Caco-2 (cell line): ENCODE measurements at regions of chr18 and their contacts with region 1.

Region 1: DNA sequence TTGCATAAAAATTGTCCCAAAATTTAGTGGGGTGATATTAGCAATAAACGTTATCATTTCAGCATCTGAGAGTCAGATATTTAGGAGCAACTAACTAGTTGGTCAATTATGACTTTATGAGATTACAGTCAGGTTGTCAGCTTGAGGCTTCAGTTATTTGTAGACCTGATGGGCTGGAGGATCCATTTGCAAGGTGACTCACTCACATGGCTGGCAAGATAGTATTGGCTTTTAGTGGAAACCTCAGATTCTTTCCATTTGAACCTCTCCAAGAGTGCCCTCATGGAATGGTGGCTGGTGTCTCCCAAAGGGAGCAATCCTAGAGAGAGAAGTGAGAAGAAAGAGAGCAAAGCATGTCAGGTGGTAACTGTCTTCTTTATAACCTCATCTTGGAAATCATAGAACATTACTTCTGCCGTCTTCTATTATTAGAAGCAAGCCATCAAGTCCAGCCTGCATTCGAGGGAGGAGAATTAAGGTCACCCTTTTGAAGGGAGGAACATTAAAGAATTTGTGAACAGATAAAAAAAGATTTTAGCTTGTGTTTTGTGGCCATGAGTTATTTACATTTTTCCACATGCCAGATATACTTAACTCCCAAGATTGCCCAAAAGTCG is 92.5 kb downstream of the HAUS1 start:
- DNase-seq: no peak
- H3K4me3 ChIP-seq: no peak overlapping the region
- H3K4me3 Mint-ChIP-seq: no peak overlapping the region
- H3K27ac Mint-ChIP-seq: no peak overlapping the region
- H3K4me1 ChIP-seq: no peaks in the 10 kb centered on the region; the same call in 1 of the 2 replicates
- H3K4me1 Mint-ChIP-seq: no peaks in the 10 kb centered on the region
- H3K27me3 ChIP-seq: no peaks in the 10 kb centered on the region
- H3K27me3 Mint-ChIP-seq: no peaks in the 10 kb centered on the region
- CTCF ChIP-seq: no peak

Region 2: DNA sequence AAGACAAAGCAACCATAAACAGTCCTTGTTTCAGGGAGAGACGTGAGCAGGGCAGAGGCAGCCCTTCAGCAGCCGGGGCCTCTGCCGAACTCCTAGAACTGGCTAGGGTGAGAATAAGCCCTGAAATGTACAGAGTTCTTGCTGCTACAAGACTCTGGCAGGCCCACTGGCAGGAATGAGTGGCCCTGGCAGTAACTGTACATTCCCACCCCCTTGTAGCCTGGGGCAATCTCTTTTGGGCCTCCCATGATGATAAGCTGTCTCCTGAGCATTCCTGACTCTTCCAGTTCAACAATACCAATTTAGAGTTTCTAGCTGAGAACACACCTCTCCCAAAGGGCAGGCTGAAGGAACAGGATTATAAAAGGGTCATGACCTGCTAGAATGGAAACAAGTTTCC is 38.2 kb before region 1 on chr18:
- CTCF ChIA-PET with region 1: interaction called, 10 read pairs
- POLR2A ChIA-PET with region 1: no interaction called
- intact Hi-C with region 1: no loop called
- DNase-seq: peak; percentile 36 to 71
- H3K4me3 ChIP-seq: no peak overlapping the region
- H3K4me3 Mint-ChIP-seq: no peak overlapping the region
- H3K27ac Mint-ChIP-seq: no peak overlapping the region
- H3K4me1 ChIP-seq: peaks cover 7% of the 10 kb centered on the region; the same call in 1 of the 2 replicates
- H3K4me1 Mint-ChIP-seq: peaks cover 16% of the 10 kb centered on the region
- H3K27me3 ChIP-seq: no peaks in the 10 kb centered on the region
- H3K27me3 Mint-ChIP-seq: no peaks in the 10 kb centered on the region
- CTCF ChIP-seq: no peak

Region 3: GRCh38 chr18:46754188-46754587 is 557.5 kb after region 1 on chr18:
- CTCF ChIA-PET with region 1: no interaction called
- POLR2A ChIA-PET with region 1: no interaction called
- intact Hi-C with region 1: no loop called
- DNase-seq: no peak
- H3K4me3 ChIP-seq: no peak overlapping the region
- H3K4me3 Mint-ChIP-seq: no peak overlapping the region
- H3K27ac Mint-ChIP-seq: no peak overlapping the region
- H3K4me1 ChIP-seq: no peaks in the 10 kb centered on the region
- H3K4me1 Mint-ChIP-seq: no peaks in the 10 kb centered on the region
- H3K27me3 ChIP-seq: no peaks in the 10 kb centered on the region
- H3K27me3 Mint-ChIP-seq: peaks cover 13% of the 10 kb centered on the region
- CTCF ChIP-seq: no peak